GM12878 (cell line): ENCODE measurements at regions of chr7 and their contacts with region 1.

Region 1: DNA sequence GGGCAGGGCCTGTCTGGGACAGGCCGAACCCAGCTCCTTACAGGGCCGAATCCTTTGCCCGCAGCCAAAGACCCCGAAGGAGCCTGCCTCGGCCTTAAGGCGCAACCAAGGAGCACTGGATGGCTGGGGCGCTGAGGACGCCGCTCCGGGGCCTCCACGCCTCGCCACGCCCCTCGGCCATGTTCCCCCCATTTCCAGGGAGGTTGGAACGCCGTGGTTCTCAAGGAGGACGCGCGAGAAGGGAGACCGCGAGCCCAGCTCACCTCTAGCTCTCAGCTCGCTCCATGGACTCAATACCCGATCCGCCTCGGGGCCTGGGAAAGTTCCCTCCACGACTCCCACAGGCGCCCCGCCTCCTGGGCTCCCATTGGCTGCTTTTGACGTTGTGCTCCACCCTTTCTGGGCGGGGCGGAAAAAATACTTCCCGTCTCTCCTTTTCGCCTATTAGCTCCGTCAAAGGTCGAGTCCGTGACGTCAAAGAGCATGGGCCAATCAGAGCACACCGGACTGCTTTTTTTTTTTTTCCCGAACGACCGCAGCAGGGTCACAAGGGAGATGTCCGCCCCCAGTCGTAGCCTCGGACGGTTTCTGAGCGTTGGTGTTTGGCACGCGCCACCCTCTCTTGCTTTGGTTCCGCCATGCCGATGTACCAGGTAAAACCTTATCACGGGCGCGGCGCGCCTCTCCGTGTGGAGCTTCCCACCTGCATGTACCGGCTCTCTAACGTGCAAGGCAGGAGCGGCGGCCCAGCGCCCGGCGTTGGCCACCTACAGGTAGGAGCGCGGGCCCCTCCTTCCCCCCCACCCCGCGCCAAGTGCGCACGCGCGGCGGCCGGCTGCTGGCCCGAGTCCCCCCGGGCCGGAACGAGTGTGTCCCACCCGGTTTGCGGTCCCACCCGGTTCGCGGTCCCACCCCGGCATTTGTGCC is 305.7 kb downstream of the TYW1 start:
- DNase-seq: peak; percentile 96
- ATAC-seq: peak; percentile 88
- H3K4me3 ChIP-seq: peak overlapping the region; percentile 99
- H3K27ac ChIP-seq: peak overlapping the region; percentile 92
- H3K4me1 ChIP-seq: peaks cover 5% of the 10 kb centered on the region
- H3K27me3 ChIP-seq: no peaks in the 10 kb centered on the region
- CTCF ChIP-seq: peak; percentile 6 to 25 (median 12); a peak in 1 of 6 replicates
- EP300 ChIP-seq: no peak
- POLR2A ChIP-seq: peak; percentile 96
- RAD21 ChIP-seq: no peak

Region 2: DNA sequence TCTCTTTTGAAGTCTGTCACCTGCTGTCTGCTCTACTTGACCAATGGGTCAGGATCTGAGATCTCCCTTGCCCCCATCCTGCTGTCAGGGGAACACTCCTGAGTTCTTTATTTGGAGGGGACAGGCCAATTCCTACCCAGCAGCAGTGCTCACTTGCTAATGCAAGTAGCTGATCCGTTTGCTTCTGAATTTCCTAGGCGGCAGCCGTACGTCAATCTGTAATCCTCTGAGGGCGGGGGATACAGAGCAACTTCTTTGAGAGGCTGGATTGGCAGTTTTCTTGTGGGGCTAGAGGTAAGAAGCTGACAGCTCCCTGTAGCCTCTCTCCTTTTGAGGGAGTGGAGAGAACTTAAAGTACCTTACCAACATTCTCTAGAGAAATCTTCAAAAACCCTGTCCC is 269.1 kb before region 1 on chr7:
- CTCF ChIA-PET with region 1: no interaction called
- POLR2A ChIA-PET with region 1: no interaction called
- RAD21 ChIA-PET with region 1: no interaction called
- SMC1A ChIA-PET with region 1: no interaction called
- in situ Hi-C with region 1: loop called (anchors 25 kb)
- intact Hi-C with region 1: no loop called
- DNase-seq: no peak
- ATAC-seq: no peak
- H3K4me3 ChIP-seq: no peak overlapping the region
- H3K27ac ChIP-seq: no peak overlapping the region
- H3K4me1 ChIP-seq: no peaks in the 10 kb centered on the region
- H3K27me3 ChIP-seq: no peaks in the 10 kb centered on the region
- CTCF ChIP-seq: no peak
- EP300 ChIP-seq: no peak
- POLR2A ChIP-seq: no peak
- RAD21 ChIP-seq: no peak

Region 3: GRCh38 chr7:67045496-67045995 is 256.8 kb before region 1 on chr7:
- CTCF ChIA-PET with region 1: interaction called, 3 read pairs
- POLR2A ChIA-PET with region 1: interaction called, 4 read pairs
- RAD21 ChIA-PET with region 1: interaction called, 10 read pairs
- SMC1A ChIA-PET with region 1: interaction called, 11 read pairs
- in situ Hi-C with region 1: loop called (anchors 25 kb)
- intact Hi-C with region 1: loop called (anchors 5 kb)
- DNase-seq: no peak
- ATAC-seq: no peak
- H3K4me3 ChIP-seq: no peak overlapping the region
- H3K27ac ChIP-seq: no peak overlapping the region
- H3K4me1 ChIP-seq: no peaks in the 10 kb centered on the region
- H3K27me3 ChIP-seq: no peaks in the 10 kb centered on the region
- CTCF ChIP-seq: no peak
- EP300 ChIP-seq: no peak
- POLR2A ChIP-seq: no peak
- RAD21 ChIP-seq: no peak

Region 4: GRCh38 chr7:67371429-67372305 is 69.3 kb after region 1 on chr7:
- CTCF ChIA-PET with region 1: no interaction called
- POLR2A ChIA-PET with region 1: no interaction called
- RAD21 ChIA-PET with region 1: no interaction called
- SMC1A ChIA-PET with region 1: no interaction called
- in situ Hi-C with region 1: no loop called
- intact Hi-C with region 1: no loop called
- DNase-seq: peak; percentile 21
- ATAC-seq: peak; percentile 99
- H3K4me3 ChIP-seq: no peak overlapping the region
- H3K27ac ChIP-seq: no peak overlapping the region
- H3K4me1 ChIP-seq: no peaks in the 10 kb centered on the region
- H3K27me3 ChIP-seq: no peaks in the 10 kb centered on the region
- CTCF ChIP-seq: peak; percentile 76 to 85 (median 84)
- EP300 ChIP-seq: no peak
- POLR2A ChIP-seq: no peak
- RAD21 ChIP-seq: peak; percentile 87